Ovary (tissue), 10 donors: ENCODE measurements at regions of chr11 and their contacts with region 1.

Region 1: GRCh38 chr11:134584706-134585433 is 172.8 kb upstream of the B3GAT1 start:
- DNase-seq: no peak
- H3K4me3 ChIP-seq: no peak overlapping the region
- H3K27ac ChIP-seq: no peak overlapping the region
- H3K4me1 ChIP-seq: no peaks in the 10 kb centered on the region
- H3K27me3 ChIP-seq: no peaks in the 10 kb centered on the region
- CTCF ChIP-seq: no peak
- EP300 ChIP-seq: no peak
- POLR2A ChIP-seq: no peak

Region 2: DNA sequence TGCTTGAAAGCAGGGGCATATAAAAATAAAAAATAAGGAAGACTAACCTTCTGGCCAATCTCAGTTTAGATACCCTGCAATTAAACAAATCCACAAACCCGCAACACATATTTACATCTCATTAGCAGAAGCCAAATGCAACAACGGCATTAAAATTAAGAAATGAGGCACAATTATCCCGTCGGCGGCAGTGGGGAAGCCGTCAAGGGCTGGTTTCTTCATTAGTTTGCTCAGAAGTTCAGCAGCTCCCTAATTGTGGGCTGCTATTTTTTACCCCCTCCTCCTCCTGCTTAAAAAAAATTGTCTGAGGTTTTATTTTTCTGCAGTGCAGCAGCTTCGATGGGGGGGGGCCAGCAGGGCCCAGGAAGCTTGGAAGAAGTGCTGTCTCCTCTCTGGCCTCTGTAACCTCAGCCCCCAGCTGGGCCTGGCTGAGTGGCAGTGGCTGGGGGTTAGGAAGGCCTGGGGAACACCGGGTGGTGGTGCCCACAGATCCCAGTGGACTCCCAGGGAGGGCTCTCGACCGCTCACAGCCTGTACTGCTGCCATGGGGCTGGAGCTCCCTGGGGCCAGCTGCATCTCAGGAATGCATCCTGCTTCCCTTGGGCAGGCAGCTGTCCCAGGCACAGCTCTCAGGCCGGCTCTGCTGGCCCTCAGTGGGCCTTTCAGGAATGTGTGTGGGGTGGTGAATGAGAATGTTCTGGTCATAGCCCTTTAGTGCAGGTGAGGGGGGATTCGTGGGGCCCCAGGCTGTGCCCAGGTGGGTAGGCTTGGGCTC is 24.1 kb before region 1 on chr11:
- intact Hi-C with region 1: no loop called
- DNase-seq: no peak
- H3K4me3 ChIP-seq: no peak overlapping the region
- H3K27ac ChIP-seq: no peak overlapping the region
- H3K4me1 ChIP-seq: no peaks in the 10 kb centered on the region
- H3K27me3 ChIP-seq: no peaks in the 10 kb centered on the region
- CTCF ChIP-seq: no peak
- EP300 ChIP-seq: no peak
- POLR2A ChIP-seq: no peak

Region 3: GRCh38 chr11:134639586-134640358 is 54.9 kb after region 1 on chr11:
- intact Hi-C with region 1: loop called in 1 of 4 experiments (anchors 10 kb)
- DNase-seq: no peak
- H3K4me3 ChIP-seq: no peak overlapping the region
- H3K27ac ChIP-seq: no peak overlapping the region
- H3K4me1 ChIP-seq: no peaks in the 10 kb centered on the region
- H3K27me3 ChIP-seq: no peaks in the 10 kb centered on the region
- CTCF ChIP-seq: no peak
- EP300 ChIP-seq: no peak
- POLR2A ChIP-seq: no peak

Region 4: GRCh38 chr11:134753771-134754500 is 169.1 kb after region 1 on chr11:
- intact Hi-C with region 1: no loop called
- DNase-seq: no peak
- H3K4me3 ChIP-seq: no peak overlapping the region
- H3K27ac ChIP-seq: no peak overlapping the region
- H3K4me1 ChIP-seq: no peaks in the 10 kb centered on the region
- H3K27me3 ChIP-seq: no peaks in the 10 kb centered on the region
- CTCF ChIP-seq: no peak
- EP300 ChIP-seq: no peak
- POLR2A ChIP-seq: no peak